ENCODE measurements at regions of chr3 and their contacts with region 1.

Region 1: DNA sequence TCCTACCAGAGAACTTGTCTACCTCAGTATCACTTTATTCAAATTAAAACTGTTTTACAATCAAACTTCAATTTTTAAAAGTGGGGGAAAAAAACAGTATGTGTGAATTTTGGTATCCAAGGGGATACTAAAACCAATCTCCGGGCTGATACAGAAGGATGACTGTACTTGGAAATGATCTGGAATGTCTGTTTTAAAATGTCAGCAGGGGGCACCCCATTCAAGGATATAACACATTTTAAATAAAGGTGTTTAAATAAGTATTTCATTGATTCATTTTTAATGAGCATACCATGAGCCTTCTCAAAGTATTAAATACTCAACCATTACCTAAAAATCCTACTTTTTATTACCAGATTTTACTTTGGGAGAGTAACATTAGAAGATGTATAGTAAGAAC is 67.9 kb downstream of the ULK4 start:
- DNase-seq: peak in 1 of 2 donors; percentile 73
- H3K4me3 ChIP-seq: no peak overlapping the region
- H3K27ac ChIP-seq: no peak overlapping the region
- H3K4me1 ChIP-seq: no peaks in the 10 kb centered on the region
- H3K27me3 ChIP-seq: no peaks in the 10 kb centered on the region
- CTCF ChIP-seq: peak in 2 of 7 experiments; percentile 25 to 48
- EP300 ChIP-seq: no peak
- POLR2A ChIP-seq: no peak

Region 2: DNA sequence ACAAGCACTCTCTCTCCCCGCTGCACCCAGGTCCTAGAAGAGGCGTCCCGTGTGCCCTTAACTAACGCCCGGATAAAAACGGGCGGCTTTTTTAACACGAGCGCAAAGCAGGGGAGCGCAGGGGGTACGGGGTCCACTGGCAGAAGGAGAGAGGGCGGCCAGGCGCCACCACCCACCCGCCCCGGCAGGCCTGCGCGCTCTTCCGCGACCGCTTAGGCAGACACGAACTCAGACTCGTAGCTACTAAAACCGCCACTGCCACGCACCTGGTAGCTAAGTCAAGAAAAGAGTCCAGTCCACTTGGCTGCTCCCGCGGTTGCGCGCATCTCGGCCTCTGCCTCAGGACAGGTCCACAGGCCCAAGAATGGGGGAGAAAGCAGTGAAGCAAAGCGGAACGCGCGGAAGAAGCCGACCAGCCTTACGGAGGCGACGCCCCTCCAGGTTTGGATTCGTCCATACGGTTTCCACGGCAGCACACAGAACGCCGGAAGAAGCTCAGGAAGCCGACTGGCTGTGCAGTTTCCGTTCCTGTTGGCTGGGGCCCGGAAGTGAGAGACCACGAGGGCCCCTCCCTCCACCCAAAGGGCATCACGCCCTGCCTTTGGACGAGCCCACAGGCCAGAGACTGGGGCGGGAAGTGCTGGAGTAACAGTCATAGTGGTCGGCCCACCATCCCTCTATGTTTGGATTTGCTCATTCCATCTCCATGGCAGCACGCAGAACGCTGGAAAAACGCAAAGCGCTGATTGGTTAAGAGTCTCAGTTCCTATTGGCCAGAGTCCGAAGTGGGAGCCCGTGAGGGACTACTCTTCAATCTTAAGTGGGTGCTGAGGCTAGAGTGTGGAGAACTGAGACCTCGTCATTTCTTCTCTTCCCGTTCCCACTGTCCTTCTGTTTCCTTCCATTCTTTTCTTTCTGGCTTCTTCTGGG is 68.0 kb after region 1 on chr3 and contains the start of gene ULK4:
- intact Hi-C with region 1: no loop called
- DNase-seq: peak; percentile 96 to 100
- H3K4me3 ChIP-seq: peak within 1 kb of the TSS; percentile 80 to 98 (median 92)
- H3K27ac ChIP-seq: peak within 1 kb of the TSS; percentile 75 to 89 (median 85)
- H3K4me1 ChIP-seq: peaks cover 9 to 17% (median 12%) of the 10 kb centered on the region in 4 donors
- H3K27me3 ChIP-seq: no peaks in the 10 kb centered on the region
- CTCF ChIP-seq: no peak
- EP300 ChIP-seq: no peak
- POLR2A ChIP-seq: no peak
- total RNA-seq, gene ULK4: 2.3 to 150 (median 12.9) TPM

Region 3: DNA sequence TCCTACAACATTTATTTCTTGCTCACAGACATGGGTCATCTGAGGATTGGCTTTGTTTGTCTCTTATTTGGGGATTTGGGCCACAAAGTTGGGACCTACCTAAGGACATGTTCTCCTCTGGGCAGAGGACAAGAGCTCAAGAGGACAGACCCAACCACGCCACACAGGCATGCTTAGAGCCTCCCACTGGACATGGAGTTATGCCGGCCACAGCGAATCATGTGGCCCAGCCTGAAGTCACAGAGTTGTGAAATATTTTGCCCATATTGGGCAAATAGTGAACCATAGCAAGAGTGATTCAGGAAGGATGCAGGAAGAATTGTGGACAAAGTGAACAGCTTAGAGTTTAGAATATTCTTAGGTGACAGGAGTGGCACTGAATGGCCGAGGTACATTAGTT is 207.1 kb after region 1 on chr3:
- intact Hi-C with region 1: loop called (anchors 5 kb)
- DNase-seq: no peak
- H3K4me3 ChIP-seq: no peak overlapping the region
- H3K27ac ChIP-seq: peak overlapping the region in 4 of 5 donors; percentile 28 to 67 (median 51)
- H3K4me1 ChIP-seq: peaks cover 6 to 63% (median 36%) of the 10 kb centered on the region in 4 donors
- H3K27me3 ChIP-seq: no peaks in the 10 kb centered on the region
- CTCF ChIP-seq: no peak
- EP300 ChIP-seq: no peak
- POLR2A ChIP-seq: no peak

Region 4: GRCh38 chr3:42190701-42191462 is 296.9 kb after region 1 on chr3:
- intact Hi-C with region 1: loop called (anchors 10 kb)
- DNase-seq: peak; percentile 83 to 89
- H3K4me3 ChIP-seq: no peak overlapping the region
- H3K27ac ChIP-seq: peak overlapping the region; percentile 50 to 73 (median 61)
- H3K4me1 ChIP-seq: peaks cover 9 to 55% (median 43%) of the 10 kb centered on the region in 4 donors
- H3K27me3 ChIP-seq: no peaks in the 10 kb centered on the region
- CTCF ChIP-seq: peak in 6 of 7 experiments; percentile 30 to 89 (median 74)
- EP300 ChIP-seq: no peak
- POLR2A ChIP-seq: no peak